ENCODE measurements at regions of chr1 and their contacts with region 1.

Region 1: DNA sequence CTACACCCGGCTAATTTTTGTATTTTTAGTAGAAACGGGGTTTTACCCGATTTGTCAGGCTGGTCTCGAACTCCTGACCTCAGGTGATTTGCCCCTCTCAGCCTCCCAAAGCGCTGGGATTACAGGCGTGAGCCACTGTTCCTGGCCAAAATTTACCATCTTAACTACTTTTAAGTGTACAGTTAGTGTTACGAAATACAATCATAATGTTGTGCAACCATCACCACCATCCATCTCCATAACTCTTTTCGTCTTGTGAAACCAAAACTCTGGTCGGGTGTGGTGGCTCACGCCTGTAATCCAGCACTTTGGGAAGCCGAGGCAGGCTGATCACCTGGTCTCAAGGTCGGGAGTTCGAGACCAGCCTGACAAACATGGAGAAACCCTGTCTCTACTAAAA is 14.1 kb upstream of the ZBTB40 start:
- DNase-seq: no peak
- H3K4me3 ChIP-seq: no peak overlapping the region
- H3K27ac ChIP-seq: no peak overlapping the region
- H3K4me1 ChIP-seq: no peaks in the 10 kb centered on the region
- H3K27me3 ChIP-seq: no peaks in the 10 kb centered on the region
- CTCF ChIP-seq: no peak

Region 2: GRCh38 chr1:22540337-22540736 is 102.8 kb after region 1 on chr1:
- intact Hi-C with region 1: loop called (anchors 10 kb)
- DNase-seq: no peak
- H3K4me3 ChIP-seq: no peak overlapping the region
- H3K27ac ChIP-seq: no peak overlapping the region
- H3K4me1 ChIP-seq: no peaks in the 10 kb centered on the region
- H3K27me3 ChIP-seq: peaks cover 0 to 26% of the 10 kb centered on the region in 2 donors
- CTCF ChIP-seq: no peak

Region 3: GRCh38 chr1:22562584-22563583 is 125.3 kb after region 1 on chr1 and contains the start of gene EPHA8:
- intact Hi-C with region 1: no loop called
- DNase-seq: no peak
- H3K4me3 ChIP-seq: no peak within 1 kb of the TSS
- H3K27ac ChIP-seq: no peak within 1 kb of the TSS
- H3K4me1 ChIP-seq: peaks cover 0 to 11% (median 5%) of the 10 kb centered on the region in 4 donors
- H3K27me3 ChIP-seq: peaks cover 0 to 90% of the 10 kb centered on the region in 2 donors
- CTCF ChIP-seq: no peak

Measured in tibial artery (tissue), 4 donors.